PC-9 (cell line): ENCODE measurements at regions of chr11 and their contacts with region 1.

Region 1: GRCh38 chr11:118928108-118928870 is 2.6 kb upstream of the BCL9L start:
- DNase-seq: peak; percentile 91 to 97
- H3K4me3 ChIP-seq: peak overlapping the region; percentile 84
- H3K27ac ChIP-seq: peak overlapping the region; percentile 64
- H3K4me1 ChIP-seq: peaks cover 32% of the 10 kb centered on the region
- H3K27me3 ChIP-seq: no peaks in the 10 kb centered on the region
- CTCF ChIP-seq: peak; percentile 99

Region 2: GRCh38 chr11:118359295-118359958 is 568.9 kb before region 1 on chr11 and contains the start of gene UBE4A:
- CTCF ChIA-PET with region 1: no interaction called
- POLR2A ChIA-PET with region 1: no interaction called
- intact Hi-C with region 1: no loop called
- DNase-seq: peak; percentile 81 to 89
- H3K4me3 ChIP-seq: peak within 1 kb of the TSS; percentile 85
- H3K27ac ChIP-seq: 0 out of 2 replicates have a peak within 1 kb of the TSS, but pooled peaks have one; percentile 25
- H3K4me1 ChIP-seq: peaks cover 16% of the 10 kb centered on the region; the same call in 1 of the 2 replicates
- H3K27me3 ChIP-seq: no peaks in the 10 kb centered on the region
- CTCF ChIP-seq: no peak
- total RNA-seq, gene UBE4A: 24.9 and 30.9 TPM in 2 replicates

Region 3: GRCh38 chr11:118689851-118690552 is 238.3 kb before region 1 on chr11:
- CTCF ChIA-PET with region 1: no interaction called
- POLR2A ChIA-PET with region 1: interaction called, 3 read pairs
- intact Hi-C with region 1: loop called (anchors 1 kb)
- DNase-seq: peak; percentile 82 to 92
- H3K4me3 ChIP-seq: peak overlapping the region; percentile 61
- H3K27ac ChIP-seq: no peak overlapping the region
- H3K4me1 ChIP-seq: peaks cover 5% of the 10 kb centered on the region
- H3K27me3 ChIP-seq: no peaks in the 10 kb centered on the region
- CTCF ChIP-seq: peak; percentile 91

Region 4: GRCh38 chr11:118870396-118871345 is 57.6 kb before region 1 on chr11:
- CTCF ChIA-PET with region 1: no interaction called
- POLR2A ChIA-PET with region 1: interaction called, 21 read pairs
- intact Hi-C with region 1: loop called (anchors 1 kb)
- DNase-seq: peak; percentile 64 to 67
- H3K4me3 ChIP-seq: peak overlapping the region; percentile 42; the same call in 1 of the 2 replicates
- H3K27ac ChIP-seq: peak overlapping the region; percentile 62
- H3K4me1 ChIP-seq: peaks cover 19% of the 10 kb centered on the region
- H3K27me3 ChIP-seq: no peaks in the 10 kb centered on the region
- CTCF ChIP-seq: no peak

Region 5: DNA sequence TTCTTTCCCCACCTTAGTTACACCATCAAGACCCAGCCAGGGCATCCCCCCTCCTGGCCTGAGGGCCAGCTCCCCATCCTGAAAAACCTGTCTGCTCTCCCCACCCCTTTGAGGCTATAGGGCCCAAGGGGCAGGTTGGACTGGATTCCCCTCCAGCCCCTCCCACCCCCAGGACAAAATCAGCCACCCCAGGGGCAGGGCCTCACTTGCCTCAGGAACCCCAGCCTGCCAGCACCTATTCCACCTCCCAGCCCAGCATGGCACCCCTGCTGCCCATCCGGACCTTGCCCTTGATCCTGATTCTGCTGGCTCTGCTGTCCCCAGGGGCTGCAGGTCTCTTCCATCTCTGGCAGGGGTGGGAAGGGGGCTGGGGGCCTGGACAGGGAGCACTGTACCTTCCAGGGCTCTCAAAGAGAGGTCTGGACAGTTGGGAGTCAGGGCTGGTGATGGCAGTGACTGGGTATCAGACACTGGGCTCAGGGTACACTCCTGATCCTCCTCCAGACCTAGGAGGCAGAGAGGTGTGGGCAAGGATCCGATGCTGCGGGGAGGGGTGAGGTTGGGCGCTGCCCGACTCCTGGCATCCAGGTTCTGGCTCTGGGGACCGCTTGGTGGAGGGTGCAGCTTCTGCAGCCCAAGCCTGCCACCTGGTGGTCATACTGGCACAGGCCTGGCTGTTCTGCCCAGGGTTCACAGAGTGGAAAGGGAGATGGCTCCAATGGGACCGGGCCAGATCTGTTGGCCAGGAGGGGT is 28.0 kb after region 1 on chr11 and contains the start of gene UPK2:
- CTCF ChIA-PET with region 1: no interaction called
- POLR2A ChIA-PET with region 1: no interaction called
- intact Hi-C with region 1: loop called (anchors 1 kb)
- DNase-seq: peak; percentile 92 to 93
- H3K4me3 ChIP-seq: peak within 1 kb of the TSS; percentile 49
- H3K27ac ChIP-seq: peak within 1 kb of the TSS; percentile 62
- H3K4me1 ChIP-seq: peaks cover 26% of the 10 kb centered on the region
- H3K27me3 ChIP-seq: no peaks in the 10 kb centered on the region
- CTCF ChIP-seq: peak; percentile 97
- total RNA-seq, gene UPK2: 17.1 and 23.2 TPM in 2 replicates

Region 6: GRCh38 chr11:119095066-119095880 is 167.0 kb after region 1 on chr11:
- CTCF ChIA-PET with region 1: no interaction called
- POLR2A ChIA-PET with region 1: no interaction called
- intact Hi-C with region 1: loop called (anchors 2 kb)
- DNase-seq: peak; percentile 98 to 99
- H3K4me3 ChIP-seq: peak overlapping the region; percentile 91
- H3K27ac ChIP-seq: peak overlapping the region; percentile 48
- H3K4me1 ChIP-seq: peaks cover 29% of the 10 kb centered on the region
- H3K27me3 ChIP-seq: no peaks in the 10 kb centered on the region
- CTCF ChIP-seq: peak; percentile 27; the same call in 1 of the 2 replicates

Region 7: DNA sequence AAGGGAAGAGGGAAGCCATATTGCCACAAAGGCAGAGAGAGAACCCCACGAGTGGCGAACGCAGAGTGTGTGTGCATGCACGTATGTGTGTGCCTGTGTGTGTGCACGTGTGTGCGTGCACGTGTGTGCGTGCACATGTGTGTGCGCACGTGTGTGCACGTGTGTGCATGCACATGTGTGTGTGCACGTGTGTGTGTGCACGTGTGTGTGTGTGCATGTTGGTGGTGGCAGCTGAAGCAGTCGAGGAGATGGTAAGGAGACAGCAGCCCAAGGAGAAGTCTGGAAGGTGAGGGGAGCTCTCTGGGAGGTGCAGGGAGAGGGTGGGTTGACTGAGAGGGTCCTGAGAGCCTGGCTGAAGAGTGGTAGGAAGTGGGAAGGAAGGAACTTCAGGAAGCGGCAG is 894.8 kb after region 1 on chr11:
- CTCF ChIA-PET with region 1: no interaction called
- POLR2A ChIA-PET with region 1: no interaction called
- intact Hi-C with region 1: no loop called
- DNase-seq: no peak
- H3K4me3 ChIP-seq: no peak overlapping the region
- H3K27ac ChIP-seq: no peak overlapping the region
- H3K4me1 ChIP-seq: no peaks in the 10 kb centered on the region
- H3K27me3 ChIP-seq: peaks cover 88% of the 10 kb centered on the region
- CTCF ChIP-seq: no peak